ENCODE measurements at regions of chr2 and their contacts with region 1.

Region 1: GRCh38 chr2:55223958-55224760 is 7.9 kb downstream of the CLHC1 start:
- DNase-seq: no peak
- H3K4me3 ChIP-seq: no peak overlapping the region
- H3K27ac ChIP-seq: no peak overlapping the region
- H3K4me1 ChIP-seq: peaks cover 11% of the 10 kb centered on the region
- CTCF ChIP-seq: no peak

Region 2: GRCh38 chr2:55213822-55214221 is 10.3 kb before region 1 on chr2:
- CTCF ChIA-PET with region 1: no interaction called
- POLR2A ChIA-PET with region 1: interaction called, 15 read pairs
- intact Hi-C with region 1: no loop called
- DNase-seq: no peak
- H3K4me3 ChIP-seq: no peak overlapping the region
- H3K27ac ChIP-seq: no peak overlapping the region
- H3K4me1 ChIP-seq: no peaks in the 10 kb centered on the region
- CTCF ChIP-seq: no peak

Measured in OCI-LY7 (cell line).